Activated B cell treated with CpG ODN at 0.5 μM for 24 hours (primary cell): ENCODE measurements at regions of chr1 and their contacts with region 1.

Region 1: DNA sequence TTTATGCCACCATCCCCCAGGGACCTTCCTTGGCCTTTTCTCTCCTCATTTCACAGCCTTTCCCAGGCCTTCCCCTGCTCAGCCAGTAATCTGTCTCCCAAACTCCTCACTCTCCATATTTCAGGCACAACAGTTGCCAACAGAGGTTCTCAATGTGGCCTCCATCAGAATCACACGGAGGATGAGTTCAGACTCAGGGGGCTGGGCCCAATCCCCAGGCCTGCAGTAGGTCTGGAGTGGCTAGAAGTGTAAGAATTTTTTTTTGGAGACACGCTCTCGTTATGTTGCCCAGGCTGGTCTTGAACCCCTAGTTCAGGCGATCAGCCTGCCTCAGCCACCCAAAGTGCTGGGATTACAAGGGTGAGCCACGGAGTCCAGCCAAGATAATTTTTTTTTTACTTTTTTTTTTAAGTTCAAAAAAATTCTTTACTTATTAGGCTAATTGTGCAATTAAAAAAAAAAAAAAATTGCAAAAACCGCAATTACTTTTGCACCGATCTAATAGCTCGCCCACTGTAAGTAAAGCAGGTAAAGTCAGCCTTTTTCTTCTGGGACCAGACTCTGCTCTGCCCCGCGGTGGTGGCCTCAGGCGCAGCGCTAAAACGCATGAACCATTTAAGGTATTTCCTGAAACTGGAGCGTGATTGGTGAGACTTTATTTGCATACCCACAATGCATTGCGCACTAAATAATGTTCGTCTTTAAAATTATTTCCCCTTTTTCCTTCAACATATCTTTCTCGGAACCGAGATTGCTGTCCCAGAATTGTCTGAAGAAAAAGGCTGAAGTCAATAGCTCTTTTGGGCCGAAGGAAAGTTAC is 18.7 kb downstream of the KIAA2013 start:
- DNase-seq: peak; percentile 74
- ATAC-seq: peak; percentile 47
- H3K4me3 Mint-ChIP-seq: peak overlapping the region; percentile 94
- H3K27ac Mint-ChIP-seq: peak overlapping the region; percentile 100
- H3K4me1 Mint-ChIP-seq: peaks cover 21% of the 10 kb centered on the region
- H3K27me3 Mint-ChIP-seq: no peaks in the 10 kb centered on the region
- CTCF ChIP-seq: no peak

Region 2: GRCh38 chr1:10657088-10657847 is 1250.2 kb before region 1 on chr1:
- CTCF ChIA-PET with region 1: no interaction called
- POLR2A ChIA-PET with region 1: no interaction called
- intact Hi-C with region 1: no loop called
- DNase-seq: no peak
- ATAC-seq: no peak
- H3K4me3 Mint-ChIP-seq: no peak overlapping the region
- H3K27ac Mint-ChIP-seq: no peak overlapping the region
- H3K4me1 Mint-ChIP-seq: no peaks in the 10 kb centered on the region
- H3K27me3 Mint-ChIP-seq: no peaks in the 10 kb centered on the region
- CTCF ChIP-seq: no peak

Region 3: DNA sequence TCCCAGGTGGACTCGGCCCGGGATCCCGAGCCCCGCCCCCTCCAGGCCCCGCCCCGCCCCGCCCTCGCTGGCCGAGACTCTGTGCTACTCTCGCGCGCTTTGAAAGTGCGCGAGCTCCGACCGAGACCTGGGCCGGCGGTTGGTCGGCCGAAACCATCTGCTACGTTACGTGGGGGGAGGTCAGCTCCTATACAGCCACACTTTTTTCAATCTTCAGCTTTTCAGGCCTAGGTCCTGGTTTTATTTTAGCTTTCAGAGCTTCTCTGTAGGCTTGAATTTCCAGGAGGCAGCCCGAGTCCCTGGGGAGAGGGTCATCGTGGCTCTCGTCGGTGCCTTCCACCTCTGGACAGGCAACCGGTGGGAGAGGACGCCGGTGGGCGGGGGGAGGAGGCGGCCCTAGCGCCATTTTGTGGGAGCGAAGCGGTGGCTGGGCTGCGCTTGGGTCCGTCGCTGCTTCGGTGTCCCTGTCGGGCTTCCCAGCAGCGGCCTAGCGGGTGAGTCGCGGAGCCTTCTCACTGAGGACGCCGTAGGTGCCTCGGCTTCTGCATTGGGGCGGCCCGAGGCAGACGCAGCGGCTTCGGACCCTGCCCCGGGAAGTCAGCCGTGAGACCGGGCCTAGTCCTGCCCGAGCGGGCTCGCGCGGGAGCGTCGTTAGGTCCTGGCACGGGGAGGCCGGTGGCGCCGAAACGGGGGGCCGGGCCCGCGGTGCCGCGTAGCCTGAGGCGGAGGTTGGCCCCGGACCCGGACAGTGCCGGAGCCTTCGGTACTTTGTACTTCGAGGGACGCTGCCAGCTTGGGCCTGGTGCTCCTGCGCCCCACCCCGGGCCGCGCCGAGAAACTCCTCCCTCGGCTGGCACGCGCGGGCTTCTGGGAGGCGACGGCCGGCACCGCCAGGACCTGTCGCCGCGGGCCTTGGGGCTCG is 895.0 kb before region 1 on chr1 and contains the start of gene TARDBP:
- CTCF ChIA-PET with region 1: no interaction called
- POLR2A ChIA-PET with region 1: interaction called, 19 read pairs
- intact Hi-C with region 1: no loop called
- DNase-seq: peak; percentile 93
- ATAC-seq: peak; percentile 87
- H3K4me3 Mint-ChIP-seq: peak within 1 kb of the TSS; percentile 89
- H3K27ac Mint-ChIP-seq: peak within 1 kb of the TSS; percentile 99
- H3K4me1 Mint-ChIP-seq: peaks cover 35% of the 10 kb centered on the region
- H3K27me3 Mint-ChIP-seq: no peaks in the 10 kb centered on the region
- CTCF ChIP-seq: no peak
- total RNA-seq, gene TARDBP: 170 and 193 TPM in 2 replicates

Region 4: GRCh38 chr1:11661103-11661502 is 246.4 kb before region 1 on chr1:
- CTCF ChIA-PET with region 1: no interaction called
- POLR2A ChIA-PET with region 1: interaction called, 21 read pairs
- intact Hi-C with region 1: no loop called
- DNase-seq: no peak
- ATAC-seq: no peak
- H3K4me3 Mint-ChIP-seq: no peak overlapping the region
- H3K27ac Mint-ChIP-seq: no peak overlapping the region
- H3K4me1 Mint-ChIP-seq: no peaks in the 10 kb centered on the region
- H3K27me3 Mint-ChIP-seq: no peaks in the 10 kb centered on the region
- CTCF ChIP-seq: no peak

Region 5: GRCh38 chr1:11813021-11813420 is 94.5 kb before region 1 on chr1:
- CTCF ChIA-PET with region 1: no interaction called
- POLR2A ChIA-PET with region 1: interaction called, 163 read pairs
- intact Hi-C with region 1: loop called (anchors 2 kb)
- DNase-seq: no peak
- ATAC-seq: no peak
- H3K4me3 Mint-ChIP-seq: no peak overlapping the region
- H3K27ac Mint-ChIP-seq: peak overlapping the region; percentile 77
- H3K4me1 Mint-ChIP-seq: peaks cover 57% of the 10 kb centered on the region
- H3K27me3 Mint-ChIP-seq: no peaks in the 10 kb centered on the region
- CTCF ChIP-seq: no peak

Region 6: DNA sequence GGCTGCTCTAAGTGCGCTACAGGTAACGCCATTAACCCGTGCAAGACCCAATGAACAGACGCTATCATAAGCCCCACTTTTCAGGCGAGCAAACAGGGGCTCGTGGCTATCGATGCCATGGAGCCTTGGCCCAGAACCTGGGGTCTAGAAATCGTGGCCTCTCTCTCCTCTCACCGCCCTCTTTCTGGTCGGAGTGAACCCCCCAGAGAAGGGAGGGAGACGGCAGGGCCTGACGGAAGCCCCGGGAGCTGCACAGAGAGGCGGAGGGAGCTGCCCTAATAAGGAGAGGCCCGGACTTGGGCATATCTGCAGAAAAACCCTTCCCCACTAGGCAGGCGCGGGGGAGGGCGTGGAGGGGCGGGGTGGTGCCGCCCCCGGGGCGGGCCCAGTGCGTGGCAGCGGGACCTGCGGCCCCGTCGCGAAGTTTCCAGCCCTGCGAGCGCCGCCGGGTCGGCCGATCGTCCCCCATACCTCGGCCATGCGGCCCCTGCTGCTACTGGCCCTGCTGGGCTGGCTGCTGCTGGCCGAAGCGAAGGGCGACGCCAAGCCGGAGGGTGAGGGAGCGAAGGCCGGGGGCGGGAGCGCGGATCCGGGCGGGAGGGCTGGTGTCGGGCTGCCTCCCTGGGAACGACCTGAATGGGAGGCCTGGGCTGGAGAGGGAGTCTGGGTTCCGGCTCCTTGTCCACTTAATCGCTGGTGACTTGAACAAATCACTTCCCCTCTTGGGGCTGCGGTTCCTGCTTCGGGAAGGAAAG is 27.0 kb after region 1 on chr1 and contains the start of gene PLOD1:
- CTCF ChIA-PET with region 1: interaction called, 3 read pairs
- POLR2A ChIA-PET with region 1: interaction called, 184 read pairs
- intact Hi-C with region 1: loop called (anchors 1 kb)
- DNase-seq: peak; percentile 76
- ATAC-seq: peak; percentile 99
- H3K4me3 Mint-ChIP-seq: peak within 1 kb of the TSS; percentile 86
- H3K27ac Mint-ChIP-seq: peak within 1 kb of the TSS; percentile 59
- H3K4me1 Mint-ChIP-seq: peaks cover 7% of the 10 kb centered on the region
- H3K27me3 Mint-ChIP-seq: no peaks in the 10 kb centered on the region
- CTCF ChIP-seq: no peak
- total RNA-seq, gene PLOD1: 15.7 and 18.6 TPM in 2 replicates

Region 7: DNA sequence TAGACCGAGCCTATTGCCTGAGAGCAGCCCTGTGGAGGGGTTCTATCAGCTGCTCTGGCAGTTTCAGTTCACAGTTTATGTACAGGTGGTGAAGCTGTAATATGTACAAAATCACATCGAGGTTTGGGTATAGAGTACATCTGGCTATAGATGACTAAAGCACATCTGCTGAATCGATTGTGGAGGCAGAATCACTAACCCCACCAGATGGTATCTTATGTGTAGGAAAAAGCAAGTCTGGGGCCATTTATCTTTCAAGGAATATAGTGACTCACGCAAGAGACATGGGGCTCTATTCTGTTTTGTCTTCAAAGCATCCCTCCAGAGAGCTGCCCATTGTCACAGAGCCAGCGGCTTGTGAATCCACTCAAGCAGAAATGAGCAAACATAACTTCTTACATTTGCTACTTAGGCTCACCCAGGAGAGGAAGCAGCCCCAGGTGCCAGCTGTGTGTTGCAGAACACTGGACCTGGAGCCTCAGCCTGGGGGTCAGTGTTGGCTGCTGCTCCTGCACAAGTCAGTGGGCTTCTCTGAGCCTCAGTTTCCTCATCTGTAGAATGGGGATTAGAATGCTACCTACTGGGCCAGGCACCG is 133.1 kb after region 1 on chr1:
- CTCF ChIA-PET with region 1: no interaction called
- POLR2A ChIA-PET with region 1: interaction called, 79 read pairs
- intact Hi-C with region 1: no loop called
- DNase-seq: no peak
- ATAC-seq: peak; percentile 85
- H3K4me3 Mint-ChIP-seq: peak overlapping the region; percentile 73
- H3K27ac Mint-ChIP-seq: peak overlapping the region; percentile 88
- H3K4me1 Mint-ChIP-seq: peaks cover 48% of the 10 kb centered on the region
- H3K27me3 Mint-ChIP-seq: no peaks in the 10 kb centered on the region
- CTCF ChIP-seq: no peak

Region 8: DNA sequence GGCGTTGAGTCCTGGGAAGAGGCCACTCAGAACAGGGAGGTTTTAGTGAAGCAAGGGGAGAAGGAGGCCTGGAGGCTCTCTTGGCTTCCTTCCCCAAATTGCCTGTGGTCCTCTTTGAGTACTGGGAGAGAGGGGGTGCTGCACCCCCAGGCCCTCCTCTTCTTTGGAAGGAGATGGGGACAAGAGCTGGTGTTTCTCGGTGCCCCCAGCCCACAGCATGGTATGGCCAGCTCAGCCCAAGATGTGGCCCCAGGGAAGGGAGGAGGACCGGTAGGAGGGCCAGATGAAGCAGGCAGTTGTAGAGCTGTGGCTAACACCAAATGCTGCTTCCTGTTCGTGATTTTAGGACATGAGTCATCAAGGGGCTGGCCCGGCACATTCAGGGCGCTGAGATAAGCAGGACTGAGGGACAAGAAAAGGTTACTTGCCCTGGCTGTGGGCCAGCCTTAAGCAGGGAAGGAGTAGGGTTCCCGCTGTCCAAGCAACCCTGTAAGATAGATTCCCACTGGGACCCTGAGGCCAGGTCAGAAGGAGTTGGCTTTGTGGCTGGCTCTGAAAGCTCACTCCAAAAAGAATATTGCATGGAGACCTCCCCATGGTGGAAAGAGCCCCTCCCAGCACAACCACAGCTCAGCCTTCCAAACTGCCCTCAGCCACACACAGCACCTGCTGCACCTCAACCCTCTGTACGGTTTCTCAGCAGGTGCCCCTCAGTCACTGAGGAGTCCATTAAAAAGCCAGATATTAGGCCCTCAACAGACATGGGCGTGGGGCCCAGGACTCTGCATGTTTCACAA is 254.4 kb after region 1 on chr1:
- CTCF ChIA-PET with region 1: no interaction called
- POLR2A ChIA-PET with region 1: interaction called, 31 read pairs
- intact Hi-C with region 1: no loop called
- DNase-seq: peak; percentile 55
- ATAC-seq: peak; percentile 78
- H3K4me3 Mint-ChIP-seq: peak overlapping the region; percentile 63
- H3K27ac Mint-ChIP-seq: peak overlapping the region; percentile 91
- H3K4me1 Mint-ChIP-seq: peaks cover 74% of the 10 kb centered on the region
- H3K27me3 Mint-ChIP-seq: no peaks in the 10 kb centered on the region
- CTCF ChIP-seq: no peak

Region 9: DNA sequence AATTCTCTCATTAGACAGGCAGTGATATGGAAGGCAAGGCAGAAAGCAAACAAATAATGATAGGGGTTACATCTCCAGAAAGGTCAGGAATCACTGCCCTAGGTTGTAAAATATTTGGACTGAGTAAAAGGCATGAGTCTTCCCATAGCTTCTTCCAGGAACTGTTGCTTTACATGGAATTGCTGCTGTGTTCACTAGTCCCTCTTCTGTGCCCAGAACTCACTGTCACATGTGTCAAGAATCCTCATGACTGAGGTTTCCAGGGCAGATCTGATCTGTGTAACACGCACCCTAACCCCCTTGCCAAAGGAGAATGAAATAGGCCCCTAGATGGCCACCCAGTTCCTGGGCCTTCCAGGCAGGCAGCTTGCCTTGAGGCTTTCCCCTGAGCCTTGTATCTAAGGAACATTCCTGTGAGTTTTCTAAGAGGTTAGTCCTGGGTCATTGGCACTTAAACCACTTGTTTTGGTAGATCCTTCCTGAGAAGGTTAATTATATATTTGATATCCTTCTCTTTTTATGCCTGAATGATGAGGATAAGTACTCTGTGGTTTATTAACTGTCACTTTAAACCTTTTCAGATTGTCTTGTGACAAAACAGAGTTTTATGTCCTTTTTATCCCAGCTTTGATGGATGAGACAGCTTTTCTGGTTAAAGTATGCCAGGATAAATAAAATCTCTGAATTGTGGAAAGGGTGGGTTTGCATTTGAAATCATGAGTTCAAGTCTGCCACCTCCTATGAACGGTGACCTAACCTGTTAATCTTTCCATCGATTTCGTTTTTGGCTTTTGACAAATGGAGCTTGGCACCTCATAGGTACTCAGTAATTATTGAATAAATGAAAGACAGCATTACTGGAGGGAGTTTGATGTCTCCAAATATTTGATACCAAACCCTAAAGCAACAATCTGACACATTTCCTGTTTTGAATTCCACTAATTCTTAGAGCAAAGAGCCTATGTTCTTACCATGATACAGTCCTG is 547.2 kb after region 1 on chr1:
- CTCF ChIA-PET with region 1: no interaction called
- POLR2A ChIA-PET with region 1: no interaction called
- intact Hi-C with region 1: no loop called
- DNase-seq: no peak
- ATAC-seq: no peak
- H3K4me3 Mint-ChIP-seq: no peak overlapping the region
- H3K27ac Mint-ChIP-seq: no peak overlapping the region
- H3K4me1 Mint-ChIP-seq: peaks cover 8% of the 10 kb centered on the region
- H3K27me3 Mint-ChIP-seq: no peaks in the 10 kb centered on the region
- CTCF ChIP-seq: no peak